ENCODE measurements at regions of chr10 and their contacts with region 1.

Region 1: GRCh38 chr10:91923371-91924211 is at the start of gene BTAF1:
- DNase-seq: peak; percentile 90 to 94
- ATAC-seq: peak; percentile 98 to 100 (median 100)
- H3K4me3 ChIP-seq: peak within 1 kb of the TSS; percentile 73 to 95 (median 86)
- H3K27ac ChIP-seq: peak within 1 kb of the TSS; percentile 72 to 98 (median 97)
- H3K4me1 ChIP-seq: peaks cover 4 to 47% (median 31%) of the 10 kb centered on the region in 9 donors
- H3K27me3 ChIP-seq: peaks cover 0 to 6% (median 0%) of the 10 kb centered on the region in 7 donors
- CTCF ChIP-seq: no peak
- total RNA-seq, gene BTAF1: 10.9 to 14.7 (median 12.4) TPM

Region 2: DNA sequence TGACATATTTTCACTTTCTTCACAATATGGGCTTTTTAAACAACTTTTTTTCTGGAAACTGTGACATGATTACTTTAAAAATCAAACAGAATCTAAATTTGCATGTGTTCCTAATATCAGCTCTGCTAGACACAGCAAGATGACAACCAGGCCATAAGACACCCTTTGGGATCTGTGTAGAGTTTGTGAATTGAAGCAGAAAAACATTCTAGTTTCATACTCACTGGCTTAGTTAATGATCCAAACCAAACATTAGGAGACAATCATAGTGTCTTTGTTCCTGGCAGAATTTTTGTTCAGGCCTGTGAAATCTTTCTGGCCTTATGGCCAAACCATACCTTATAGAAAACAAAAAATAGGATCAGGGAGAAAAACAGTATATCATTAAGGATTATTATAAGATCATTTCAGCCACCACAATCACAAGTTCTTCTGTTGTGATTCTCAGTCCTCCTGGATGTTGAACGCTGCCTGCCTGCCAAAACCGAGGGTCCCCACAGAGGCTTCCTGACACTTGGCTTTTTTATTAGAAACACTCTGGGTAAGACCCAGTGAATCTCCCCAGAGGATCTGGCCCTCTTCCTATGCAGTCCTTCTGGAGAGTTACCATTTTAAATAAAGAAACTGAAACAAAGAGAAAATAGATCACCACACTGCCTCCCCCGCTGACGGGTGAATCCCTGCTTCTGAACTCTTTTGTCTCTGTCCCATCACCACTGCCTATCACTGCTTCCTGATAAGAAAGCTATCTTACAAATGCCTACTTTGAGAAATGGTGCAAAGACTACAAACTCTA is 211.5 kb before region 1 on chr10:
- intact Hi-C with region 1: no loop called
- DNase-seq: no peak
- ATAC-seq: no peak
- H3K4me3 ChIP-seq: no peak overlapping the region
- H3K27ac ChIP-seq: no peak overlapping the region
- H3K4me1 ChIP-seq: peaks cover 0 to 10% (median 0%) of the 10 kb centered on the region in 9 donors
- H3K27me3 ChIP-seq: peaks cover 0 to 6% (median 0%) of the 10 kb centered on the region in 7 donors
- CTCF ChIP-seq: no peak

Region 3: GRCh38 chr10:91758303-91759146 is 165.1 kb before region 1 on chr10:
- intact Hi-C with region 1: loop called in 1 of 10 experiments (anchors 5 kb)
- DNase-seq: no peak
- ATAC-seq: peak in 1 of 8 donors; percentile 53
- H3K4me3 ChIP-seq: no peak overlapping the region
- H3K27ac ChIP-seq: no peak overlapping the region
- H3K4me1 ChIP-seq: no peaks in the 10 kb centered on the region
- H3K27me3 ChIP-seq: peaks cover 0 to 8% (median 0%) of the 10 kb centered on the region in 7 donors
- CTCF ChIP-seq: peak in 8 of 9 donors; percentile 34 to 72 (median 60)

Region 4: GRCh38 chr10:91779011-91779605 is 144.5 kb before region 1 on chr10:
- intact Hi-C with region 1: no loop called
- DNase-seq: no peak
- ATAC-seq: no peak
- H3K4me3 ChIP-seq: no peak overlapping the region
- H3K27ac ChIP-seq: no peak overlapping the region
- H3K4me1 ChIP-seq: no peaks in the 10 kb centered on the region
- H3K27me3 ChIP-seq: peaks cover 0 to 10% (median 9%) of the 10 kb centered on the region in 7 donors
- CTCF ChIP-seq: no peak

Measured in heart right ventricle (tissue), 16 donors.